Lower lobe of right lung (tissue), 2 donors: ENCODE measurements at regions of chr9 and their contacts with region 1.

Region 1: GRCh38 chr9:6055213-6055612 is 39.8 kb upstream of the RANBP6 start:
- DNase-seq: no peak
- ATAC-seq: peak; percentile 92 to 97
- H3K4me3 ChIP-seq: no peak overlapping the region
- H3K27ac ChIP-seq: no peak overlapping the region
- H3K4me1 ChIP-seq: peaks cover 8% of the 10 kb centered on the region
- H3K27me3 ChIP-seq: no peaks in the 10 kb centered on the region
- CTCF ChIP-seq: peak; percentile 63

Region 2: DNA sequence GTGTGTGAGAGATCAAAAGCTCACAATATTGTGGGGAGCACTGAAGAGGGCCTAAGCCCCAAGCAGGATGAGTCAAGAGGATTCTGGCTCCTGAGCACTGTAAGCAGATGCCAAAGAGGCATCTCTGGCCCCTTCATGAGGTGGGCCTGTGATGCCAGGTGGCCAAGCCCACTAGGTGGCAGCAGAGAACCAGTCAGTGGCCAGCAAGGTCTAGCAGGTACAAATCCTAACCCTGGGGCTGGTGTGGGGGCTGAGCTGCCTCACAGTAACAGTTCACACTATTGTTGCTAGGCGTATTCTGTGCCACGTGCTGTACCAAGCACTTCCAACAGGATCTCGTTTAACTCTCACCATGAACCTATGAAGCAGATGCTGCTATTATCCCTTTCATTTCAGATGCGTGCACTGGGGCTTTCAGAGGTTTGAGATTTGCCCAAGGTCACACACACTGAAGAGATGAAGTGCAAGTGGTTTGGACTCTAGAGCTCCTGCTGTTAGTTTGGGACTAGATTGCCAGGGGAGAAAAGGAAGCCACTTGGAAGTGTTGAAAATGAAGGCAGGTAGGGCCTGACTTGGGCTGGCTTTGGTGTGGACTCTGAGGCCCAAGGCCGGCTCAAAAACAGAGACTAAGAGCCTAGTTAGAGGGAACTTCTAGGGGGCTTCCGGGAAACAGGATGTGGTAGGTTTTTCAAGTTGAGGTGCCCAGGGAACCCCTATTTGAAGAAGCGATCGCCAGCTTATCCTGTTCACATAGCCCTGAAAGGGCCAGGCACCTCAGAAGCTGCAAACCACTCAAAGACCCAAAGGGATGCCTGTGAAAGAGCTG is 168.9 kb before region 1 on chr9:
- intact Hi-C with region 1: loop called (anchors 10 kb)
- DNase-seq: peak; percentile 77
- ATAC-seq: peak; percentile 87 to 89
- H3K4me3 ChIP-seq: no peak overlapping the region
- H3K27ac ChIP-seq: no peak overlapping the region
- H3K4me1 ChIP-seq: no peaks in the 10 kb centered on the region
- H3K27me3 ChIP-seq: no peaks in the 10 kb centered on the region
- CTCF ChIP-seq: peak; percentile 94

Region 3: GRCh38 chr9:6305954-6306563 is 250.8 kb after region 1 on chr9:
- intact Hi-C with region 1: loop called (anchors 10 kb)
- DNase-seq: no peak
- ATAC-seq: peak; percentile 61 to 73
- H3K4me3 ChIP-seq: no peak overlapping the region
- H3K27ac ChIP-seq: no peak overlapping the region
- H3K4me1 ChIP-seq: no peaks in the 10 kb centered on the region
- H3K27me3 ChIP-seq: no peaks in the 10 kb centered on the region
- CTCF ChIP-seq: peak; percentile 60